GM10248 (cell line): ENCODE measurements at regions of chr1 and their contacts with region 1.

Region 1: GRCh38 chr1:161038523-161039153 is at the start of gene TSTD1:
- DNase-seq: peak; percentile 92
- CTCF ChIP-seq: no peak

Region 2: GRCh38 chr1:159632922-159633321 is 1405.7 kb before region 1 on chr1:
- CTCF ChIA-PET with region 1: no interaction called
- POLR2A ChIA-PET with region 1: interaction called, 11 read pairs
- DNase-seq: no peak
- CTCF ChIP-seq: no peak

Region 3: GRCh38 chr1:160997323-160998038 is 41.2 kb before region 1 on chr1:
- CTCF ChIA-PET with region 1: interaction called, 11 read pairs
- POLR2A ChIA-PET with region 1: interaction called, 4 read pairs
- DNase-seq: peak; percentile 66
- CTCF ChIP-seq: peak; percentile 81

Region 4: GRCh38 chr1:161021165-161021960 is 17.3 kb before region 1 on chr1:
- CTCF ChIA-PET with region 1: interaction called, 10 read pairs
- POLR2A ChIA-PET with region 1: interaction called, 7 read pairs
- DNase-seq: peak; percentile 96
- CTCF ChIP-seq: no peak

Region 5: GRCh38 chr1:161298116-161298515 is 259.5 kb after region 1 on chr1:
- CTCF ChIA-PET with region 1: no interaction called
- POLR2A ChIA-PET with region 1: no interaction called
- DNase-seq: peak; percentile 66
- CTCF ChIP-seq: no peak

Region 6: GRCh38 chr1:161506336-161507223 is 467.9 kb after region 1 on chr1:
- CTCF ChIA-PET with region 1: no interaction called
- POLR2A ChIA-PET with region 1: no interaction called
- DNase-seq: no peak
- CTCF ChIP-seq: no peak